HepG2 (cell line): ENCODE measurements at regions of chr9 and their contacts with region 1.

Region 1: GRCh38 chr9:93173365-93174051 is 10.4 kb upstream of the WNK2 start:
- DNase-seq: no peak
- ATAC-seq: no peak
- H3K4me3 ChIP-seq: no peak overlapping the region
- H3K27ac ChIP-seq: no peak overlapping the region
- H3K4me1 ChIP-seq: peaks cover 23% of the 10 kb centered on the region
- H3K27me3 ChIP-seq: peaks cover 5 to 41% of the 10 kb centered on the region in 2 experiments
- CTCF ChIP-seq: no peak
- EP300 ChIP-seq: no peak
- POLR2A ChIP-seq: no peak
- RAD21 ChIP-seq: no peak

Region 2: GRCh38 chr9:93209097-93209496 is 35.6 kb after region 1 on chr9:
- CTCF ChIA-PET with region 1: no interaction called
- POLR2A ChIA-PET with region 1: no interaction called
- in situ Hi-C with region 1: no loop called
- intact Hi-C with region 1: loop called (anchors 1 kb)
- DNase-seq: peak; percentile 49
- ATAC-seq: peak; percentile 36
- H3K4me3 ChIP-seq: peak overlapping the region in 1 of 3 experiments; percentile 36; a peak in 1 of 6 replicates
- H3K27ac ChIP-seq: peak overlapping the region; percentile 50
- H3K4me1 ChIP-seq: peaks cover 93% of the 10 kb centered on the region
- H3K27me3 ChIP-seq: no peaks in the 10 kb centered on the region
- CTCF ChIP-seq: no peak
- EP300 ChIP-seq: peak in 1 of 2 experiments; percentile 37; a peak in 2 of 4 replicates
- POLR2A ChIP-seq: no peak
- RAD21 ChIP-seq: no peak